SK-N-SH (cell line): ENCODE measurements at regions of chr7 and their contacts with region 1.

Region 1: DNA sequence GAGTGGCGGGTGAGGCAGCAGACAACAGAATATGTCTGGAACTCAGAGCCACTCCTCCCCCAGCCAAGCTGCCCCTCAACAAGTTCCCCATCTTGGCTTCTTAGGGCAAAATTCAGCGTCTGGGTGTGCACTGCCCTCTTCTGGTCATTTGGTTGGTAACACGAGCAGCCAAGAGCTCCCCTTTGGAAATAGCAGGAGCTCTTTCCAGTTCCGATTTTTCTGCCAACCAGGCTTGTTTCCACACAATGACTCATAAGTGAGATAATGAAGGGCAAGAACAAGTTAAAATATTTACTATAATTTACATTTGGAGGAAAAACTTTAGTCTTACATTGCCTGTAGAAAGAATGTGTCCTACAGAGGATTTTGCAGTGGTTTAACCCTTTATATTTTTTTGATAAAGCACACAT is 70.5 kb downstream of the ADCYAP1R1 start:
- DNase-seq: peak; percentile 74
- H3K4me3 ChIP-seq: no peak overlapping the region; a peak in 1 of 4 replicates
- H3K27ac ChIP-seq: no peak overlapping the region
- H3K4me1 ChIP-seq: peaks cover 0 to 2% of the 10 kb centered on the region in 2 experiments; a peak in 2 of 4 replicates
- H3K27me3 ChIP-seq: no peaks in the 10 kb centered on the region; the same call in 1 of the 2 replicates
- CTCF ChIP-seq: peak; percentile 99
- EP300 ChIP-seq: no peak
- RAD21 ChIP-seq: peak; percentile 98

Region 2: DNA sequence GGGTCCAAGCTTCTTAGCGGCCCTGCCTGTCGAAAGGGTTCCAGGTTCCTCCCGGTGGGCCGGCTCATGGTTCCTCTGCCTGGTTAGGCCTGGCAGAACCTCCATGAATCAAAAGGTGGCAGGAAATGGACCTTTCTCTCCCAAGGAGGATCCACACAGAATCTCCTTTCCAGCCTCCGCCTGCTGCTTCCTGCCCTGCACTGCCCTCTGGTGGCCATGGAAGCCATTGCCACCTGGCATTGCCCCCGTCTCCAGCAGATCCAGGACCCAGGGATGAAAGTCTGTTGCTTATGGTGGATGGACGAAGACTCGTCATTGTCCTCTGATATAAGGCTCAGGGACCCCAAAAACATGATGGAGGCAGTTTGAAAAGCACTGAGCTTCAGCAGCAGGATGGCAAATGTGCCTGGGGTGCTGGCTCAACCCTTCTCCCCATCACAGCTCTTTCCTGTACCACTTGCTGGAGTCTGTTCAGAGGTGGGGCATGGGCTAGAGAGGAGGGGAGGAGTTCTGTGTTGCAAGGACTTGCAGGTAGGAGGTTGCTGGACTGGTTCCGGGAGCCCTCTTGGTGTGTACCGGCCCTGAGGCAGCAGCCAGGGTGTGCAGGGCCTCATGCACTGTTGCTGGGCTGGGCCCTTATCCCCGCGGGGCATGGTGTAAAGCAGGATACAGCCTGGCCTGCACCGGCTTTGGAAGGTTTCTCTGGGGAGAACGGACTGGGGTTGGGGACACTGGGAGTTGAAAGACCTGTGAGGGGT is 382.1 kb before region 1 on chr7:
- CTCF ChIA-PET with region 1: interaction called, 11 read pairs
- POLR2A ChIA-PET with region 1: no interaction called
- DNase-seq: peak; percentile 96
- H3K4me3 ChIP-seq: no peak overlapping the region; a peak in 1 of 4 replicates
- H3K27ac ChIP-seq: no peak overlapping the region
- H3K4me1 ChIP-seq: peaks cover 0 to 3% of the 10 kb centered on the region in 2 experiments; a peak in 1 of 4 replicates
- H3K27me3 ChIP-seq: peaks cover 35% of the 10 kb centered on the region; the same call in 1 of the 2 replicates
- CTCF ChIP-seq: peak; percentile 100
- EP300 ChIP-seq: no peak
- RAD21 ChIP-seq: peak; percentile 99

Region 3: GRCh38 chr7:30800785-30801252 is 321.8 kb before region 1 on chr7:
- CTCF ChIA-PET with region 1: interaction called, 29 read pairs
- POLR2A ChIA-PET with region 1: no interaction called
- DNase-seq: peak; percentile 89
- H3K4me3 ChIP-seq: no peak overlapping the region
- H3K27ac ChIP-seq: peak overlapping the region in 1 of 2 experiments; percentile 4; a peak in 2 of 4 replicates
- H3K4me1 ChIP-seq: peaks cover 24 to 51% of the 10 kb centered on the region in 2 experiments
- H3K27me3 ChIP-seq: no peaks in the 10 kb centered on the region
- CTCF ChIP-seq: peak; percentile 96
- EP300 ChIP-seq: no peak
- RAD21 ChIP-seq: peak; percentile 100

Region 4: GRCh38 chr7:30965372-30965771 is 157.3 kb before region 1 on chr7:
- CTCF ChIA-PET with region 1: interaction called, 1,191 read pairs
- POLR2A ChIA-PET with region 1: interaction called, 3 read pairs
- DNase-seq: no peak
- H3K4me3 ChIP-seq: no peak overlapping the region
- H3K27ac ChIP-seq: no peak overlapping the region
- H3K4me1 ChIP-seq: no peaks in the 10 kb centered on the region
- H3K27me3 ChIP-seq: peaks cover 52% of the 10 kb centered on the region
- CTCF ChIP-seq: no peak
- EP300 ChIP-seq: no peak
- RAD21 ChIP-seq: no peak

Region 5: GRCh38 chr7:31017032-31017675 is 105.5 kb before region 1 on chr7:
- CTCF ChIA-PET with region 1: interaction called, 44 read pairs
- POLR2A ChIA-PET with region 1: no interaction called
- DNase-seq: no peak
- H3K4me3 ChIP-seq: no peak overlapping the region
- H3K27ac ChIP-seq: no peak overlapping the region
- H3K4me1 ChIP-seq: no peaks in the 10 kb centered on the region; a peak in 1 of 4 replicates
- H3K27me3 ChIP-seq: peaks cover 7% of the 10 kb centered on the region; the same call in 1 of the 2 replicates
- CTCF ChIP-seq: no peak
- EP300 ChIP-seq: no peak
- RAD21 ChIP-seq: no peak

Region 6: DNA sequence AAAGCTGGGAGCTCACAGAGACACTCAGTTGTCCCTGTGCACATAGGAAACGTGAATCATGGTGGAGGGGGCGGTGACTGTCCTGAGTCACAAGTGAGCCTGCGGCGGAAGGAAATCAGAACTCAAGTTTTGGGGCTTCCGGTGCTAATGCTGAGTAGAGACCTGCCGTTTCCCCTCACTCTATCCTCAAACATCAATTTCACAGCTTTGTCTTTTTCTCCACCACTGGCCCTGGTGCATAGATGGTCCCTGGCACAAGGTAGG is 48.6 kb before region 1 on chr7:
- CTCF ChIA-PET with region 1: interaction called, 49 read pairs
- POLR2A ChIA-PET with region 1: no interaction called
- DNase-seq: no peak
- H3K4me3 ChIP-seq: no peak overlapping the region
- H3K27ac ChIP-seq: no peak overlapping the region
- H3K4me1 ChIP-seq: no peaks in the 10 kb centered on the region
- H3K27me3 ChIP-seq: peaks cover 23% of the 10 kb centered on the region; the same call in 1 of the 2 replicates
- CTCF ChIP-seq: no peak
- EP300 ChIP-seq: no peak
- RAD21 ChIP-seq: no peak